ENCODE measurements at regions of chr20 and their contacts with region 1.

Region 1: DNA sequence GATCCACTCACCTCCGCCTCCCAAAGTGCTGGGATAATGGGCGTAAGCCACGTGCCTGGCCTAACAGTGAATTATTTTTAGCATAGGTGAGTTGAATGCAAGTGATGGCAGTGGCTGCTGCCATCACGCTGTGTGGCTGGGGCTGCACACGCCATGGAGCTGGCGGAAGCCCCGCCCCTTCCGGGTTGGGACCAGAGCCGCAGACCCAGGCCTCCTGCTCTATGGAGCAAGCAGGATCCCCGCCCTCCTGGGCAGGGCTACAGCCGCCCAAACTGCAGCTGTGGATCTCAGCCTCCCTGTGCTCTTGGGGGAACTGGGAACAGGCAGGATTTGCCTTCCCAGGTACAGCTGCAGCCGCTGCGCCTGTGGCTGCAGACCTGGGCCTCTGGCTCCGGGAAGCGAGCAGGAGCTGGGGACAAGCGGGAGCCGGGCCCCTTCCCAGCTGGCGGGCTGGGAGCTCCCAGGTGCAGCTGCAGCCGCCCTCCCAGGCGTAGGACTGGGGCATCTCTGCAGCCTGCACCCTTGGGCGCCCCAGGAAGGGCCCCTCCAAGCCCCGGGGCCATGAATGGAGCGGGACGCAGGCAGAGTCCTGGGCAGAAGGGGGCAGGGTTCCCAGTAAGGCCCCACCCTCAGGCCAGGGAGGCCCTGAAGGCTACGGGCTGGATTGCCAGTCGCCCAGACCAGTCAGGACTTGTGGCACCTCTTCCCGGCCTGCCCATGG is 30.9 kb upstream of the SLA2 start:
- DNase-seq: no peak
- ATAC-seq: peak; percentile 45
- H3K4me3 ChIP-seq: no peak overlapping the region
- H3K27ac ChIP-seq: no peak overlapping the region
- H3K4me1 ChIP-seq: no peaks in the 10 kb centered on the region
- H3K27me3 ChIP-seq: no peaks in the 10 kb centered on the region
- CTCF ChIP-seq: no peak

Region 2: GRCh38 chr20:36629719-36630681 is 46.9 kb before region 1 on chr20:
- CTCF ChIA-PET with region 1: no interaction called
- POLR2A ChIA-PET with region 1: no interaction called
- in situ Hi-C with region 1: no loop called
- intact Hi-C with region 1: no loop called
- DNase-seq: no peak
- ATAC-seq: no peak
- H3K4me3 ChIP-seq: no peak overlapping the region
- H3K27ac ChIP-seq: no peak overlapping the region
- H3K4me1 ChIP-seq: no peaks in the 10 kb centered on the region
- H3K27me3 ChIP-seq: no peaks in the 10 kb centered on the region
- CTCF ChIP-seq: no peak

Region 3: GRCh38 chr20:36688630-36689029 is 11.8 kb after region 1 on chr20:
- CTCF ChIA-PET with region 1: no interaction called
- POLR2A ChIA-PET with region 1: interaction called, 15 read pairs
- in situ Hi-C with region 1: no loop called
- intact Hi-C with region 1: no loop called
- DNase-seq: no peak
- ATAC-seq: no peak
- H3K4me3 ChIP-seq: no peak overlapping the region
- H3K27ac ChIP-seq: no peak overlapping the region
- H3K4me1 ChIP-seq: no peaks in the 10 kb centered on the region
- H3K27me3 ChIP-seq: no peaks in the 10 kb centered on the region
- CTCF ChIP-seq: no peak

Region 4: GRCh38 chr20:36895036-36895435 is 218.2 kb after region 1 on chr20:
- CTCF ChIA-PET with region 1: no interaction called
- POLR2A ChIA-PET with region 1: interaction called, 15 read pairs
- in situ Hi-C with region 1: no loop called
- intact Hi-C with region 1: no loop called
- DNase-seq: no peak
- ATAC-seq: no peak
- H3K4me3 ChIP-seq: no peak overlapping the region
- H3K27ac ChIP-seq: no peak overlapping the region
- H3K4me1 ChIP-seq: no peaks in the 10 kb centered on the region
- H3K27me3 ChIP-seq: no peaks in the 10 kb centered on the region
- CTCF ChIP-seq: no peak

Measured in Panc1 (cell line).